Aorta (tissue), 5 donors: ENCODE measurements at regions of chr6 and their contacts with region 1.

Region 1: DNA sequence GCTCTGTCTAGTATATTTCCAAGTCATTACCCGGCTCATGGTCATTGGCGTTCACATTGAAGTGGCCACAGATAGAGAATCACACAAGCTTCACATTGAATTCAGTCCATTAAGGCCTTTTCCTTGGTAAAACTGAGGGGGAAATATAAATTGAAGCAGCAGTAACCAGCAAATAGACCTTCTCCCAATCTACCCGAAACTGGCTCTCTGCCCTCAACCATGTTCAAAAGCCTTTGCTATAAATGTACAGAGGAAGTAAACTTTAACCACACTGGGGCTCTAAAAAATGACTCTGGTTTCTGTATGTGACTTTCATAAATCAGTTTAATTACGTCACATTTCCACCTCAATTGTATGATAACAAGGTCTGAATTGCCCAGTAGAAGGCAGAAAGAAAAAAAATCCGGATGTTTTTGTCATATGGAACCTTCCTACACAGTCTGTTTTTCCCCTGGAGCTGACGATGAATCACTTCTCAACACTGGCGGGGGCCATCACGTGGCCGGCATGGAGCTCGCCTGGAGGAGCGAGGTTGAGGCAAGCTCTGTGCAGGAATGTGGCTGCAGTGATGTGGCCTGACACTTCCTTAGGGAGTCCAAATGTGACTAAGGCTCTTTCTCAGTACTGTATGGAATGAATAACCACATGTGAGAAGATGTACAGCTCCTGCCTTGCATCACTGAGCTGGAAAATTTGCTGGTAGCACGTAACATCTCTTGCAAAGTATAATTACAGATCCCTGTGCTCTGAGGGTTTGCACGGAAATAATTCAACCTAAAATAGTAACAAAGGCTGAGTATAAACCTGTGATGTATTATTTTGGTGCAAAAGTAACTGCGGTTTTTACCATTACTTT is 58.6 kb upstream of the SNX9 start:
- DNase-seq: peak; percentile 93 to 96
- ATAC-seq: peak; percentile 89
- H3K4me3 ChIP-seq: no peak overlapping the region
- H3K27ac ChIP-seq: peak overlapping the region; percentile 72 to 75
- H3K4me1 ChIP-seq: peaks cover 5 to 7% of the 10 kb centered on the region in 2 donors
- H3K27me3 ChIP-seq: no peaks in the 10 kb centered on the region

Region 2: GRCh38 chr6:157514659-157515496 is 249.5 kb before region 1 on chr6:
- intact Hi-C with region 1: no loop called
- DNase-seq: no peak
- ATAC-seq: peak; percentile 69
- H3K4me3 ChIP-seq: no peak overlapping the region
- H3K27ac ChIP-seq: peak overlapping the region in 1 of 2 donors; percentile 17
- H3K4me1 ChIP-seq: no peaks in the 10 kb centered on the region
- H3K27me3 ChIP-seq: no peaks in the 10 kb centered on the region

Region 3: GRCh38 chr6:157813757-157814455 is 49.5 kb after region 1 on chr6:
- intact Hi-C with region 1: loop called in 1 of 2 experiments (anchors 5 kb)
- DNase-seq: no peak
- ATAC-seq: peak; percentile 89
- H3K4me3 ChIP-seq: no peak overlapping the region
- H3K27ac ChIP-seq: peak overlapping the region; percentile 74 to 98
- H3K4me1 ChIP-seq: no peaks in the 10 kb centered on the region
- H3K27me3 ChIP-seq: no peaks in the 10 kb centered on the region